GM12878 (cell line): ENCODE measurements at regions of chr15 and their contacts with region 1.

Region 1: GRCh38 chr15:65054333-65055200 is 9.4 kb downstream of the SLC51B start:
- DNase-seq: no peak
- ATAC-seq: peak; percentile 82
- H3K4me3 ChIP-seq: no peak overlapping the region
- H3K27ac ChIP-seq: no peak overlapping the region
- H3K4me1 ChIP-seq: peaks cover 6% of the 10 kb centered on the region
- H3K27me3 ChIP-seq: no peaks in the 10 kb centered on the region
- CTCF ChIP-seq: peak; percentile 89 to 93 (median 89)
- EP300 ChIP-seq: no peak
- POLR2A ChIP-seq: no peak
- RAD21 ChIP-seq: peak; percentile 84

Region 2: GRCh38 chr15:65077981-65078352 is 23.4 kb after region 1 on chr15:
- CTCF ChIA-PET with region 1: interaction called, 7 read pairs
- POLR2A ChIA-PET with region 1: no interaction called
- RAD21 ChIA-PET with region 1: interaction called, 8 read pairs
- SMC1A ChIA-PET with region 1: no interaction called
- in situ Hi-C with region 1: no loop called
- intact Hi-C with region 1: loop called (anchors 2 kb)
- DNase-seq: no peak
- ATAC-seq: peak; percentile 63
- H3K4me3 ChIP-seq: no peak overlapping the region
- H3K27ac ChIP-seq: no peak overlapping the region
- H3K4me1 ChIP-seq: no peaks in the 10 kb centered on the region
- H3K27me3 ChIP-seq: no peaks in the 10 kb centered on the region
- CTCF ChIP-seq: peak; percentile 3 to 45 (median 43); a peak in 3 of 6 replicates
- EP300 ChIP-seq: no peak
- POLR2A ChIP-seq: no peak
- RAD21 ChIP-seq: no peak

Region 3: GRCh38 chr15:65101411-65101890 is 46.9 kb after region 1 on chr15:
- CTCF ChIA-PET with region 1: interaction called, 18 read pairs
- POLR2A ChIA-PET with region 1: no interaction called
- RAD21 ChIA-PET with region 1: interaction called, 5 read pairs
- SMC1A ChIA-PET with region 1: interaction called, 4 read pairs
- in situ Hi-C with region 1: no loop called
- intact Hi-C with region 1: no loop called
- DNase-seq: no peak
- ATAC-seq: peak; percentile 64
- H3K4me3 ChIP-seq: no peak overlapping the region
- H3K27ac ChIP-seq: no peak overlapping the region
- H3K4me1 ChIP-seq: no peaks in the 10 kb centered on the region
- H3K27me3 ChIP-seq: no peaks in the 10 kb centered on the region
- CTCF ChIP-seq: peak; percentile 55 to 76 (median 72)
- EP300 ChIP-seq: no peak
- POLR2A ChIP-seq: no peak
- RAD21 ChIP-seq: peak; percentile 65

Region 4: GRCh38 chr15:65304389-65305144 is 250.0 kb after region 1 on chr15 and contains the start of gene RNU5B-1:
- CTCF ChIA-PET with region 1: interaction called, 3 read pairs
- POLR2A ChIA-PET with region 1: no interaction called
- RAD21 ChIA-PET with region 1: no interaction called
- SMC1A ChIA-PET with region 1: interaction called, 11 read pairs
- in situ Hi-C with region 1: loop called (anchors 5 kb)
- intact Hi-C with region 1: no loop called
- DNase-seq: peak; percentile 96
- ATAC-seq: peak; percentile 86
- H3K4me3 ChIP-seq: peak within 1 kb of the TSS; percentile 33
- H3K27ac ChIP-seq: peak within 1 kb of the TSS; percentile 97
- H3K4me1 ChIP-seq: peaks cover 10% of the 10 kb centered on the region
- H3K27me3 ChIP-seq: no peaks in the 10 kb centered on the region
- CTCF ChIP-seq: peak; percentile 82 to 91 (median 89)
- EP300 ChIP-seq: no peak
- POLR2A ChIP-seq: peak; percentile 96
- RAD21 ChIP-seq: peak; percentile 34; the same call in 1 of the 2 replicates
- polyA plus RNA-seq, gene RNU5B-1: not detected